ENCODE measurements at regions of chr3 and their contacts with region 1.

Region 1: DNA sequence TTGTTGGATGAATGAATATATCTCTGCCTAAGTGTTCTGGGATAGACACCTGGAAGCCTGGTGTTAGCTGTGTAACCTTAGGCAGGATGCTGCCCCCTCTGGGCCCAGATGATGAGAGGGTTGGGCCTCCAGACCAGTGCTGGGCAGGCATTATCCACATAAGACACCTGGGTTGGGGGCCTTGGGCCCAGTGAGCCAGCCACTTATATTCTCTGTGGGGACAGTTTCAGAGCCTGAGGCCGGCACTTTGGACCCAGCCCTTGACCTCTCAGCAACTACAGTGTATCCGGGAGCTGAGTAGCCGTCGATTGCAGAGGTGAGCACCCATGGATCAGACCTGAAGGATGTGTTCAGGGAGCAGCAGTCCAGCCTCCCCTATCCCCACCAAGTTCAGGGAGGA is 2.2 kb downstream of the HEMK1 start:
- DNase-seq: no peak
- H3K4me3 ChIP-seq: no peak overlapping the region
- CTCF ChIP-seq: no peak
- POLR2A ChIP-seq: no peak

Region 2: DNA sequence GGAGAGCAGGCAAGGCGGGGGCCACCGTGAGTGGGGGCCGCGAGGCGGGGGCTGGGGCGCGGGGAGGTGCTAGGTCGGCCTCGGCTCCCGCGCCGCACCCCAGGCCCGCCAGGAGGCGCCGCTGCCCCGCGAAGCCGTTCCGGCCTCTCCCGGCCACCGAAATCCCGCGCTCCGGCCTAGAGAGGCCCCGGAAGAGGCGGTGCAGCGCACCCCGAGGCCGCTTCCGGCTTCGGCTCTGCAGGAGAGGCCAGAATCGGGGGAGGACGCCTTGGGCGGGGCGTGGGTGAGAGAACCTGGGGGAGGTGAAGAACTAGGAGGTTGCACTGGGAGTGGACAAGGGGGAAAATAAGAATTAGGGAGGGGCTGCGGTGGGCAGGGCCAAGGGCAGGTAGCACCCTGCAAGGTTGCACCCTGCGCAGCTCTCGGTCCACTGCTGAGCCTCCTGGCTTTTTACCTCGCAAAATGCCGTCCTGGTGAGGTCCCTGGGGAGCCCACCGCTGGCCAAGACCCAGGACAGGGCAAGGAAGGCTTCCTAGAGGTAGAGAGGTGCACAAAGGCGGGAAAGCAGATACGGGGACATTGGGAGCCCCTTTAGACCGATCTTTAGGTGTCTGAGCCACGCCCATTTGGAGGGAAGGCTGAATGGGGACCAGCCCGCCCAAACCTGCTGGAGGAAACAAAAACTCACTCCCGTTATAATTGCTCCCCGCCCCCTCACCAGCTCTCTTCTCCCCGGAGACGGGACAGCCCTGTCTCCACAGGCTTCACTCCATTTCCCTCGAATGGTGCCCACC is 343.9 kb before region 1 on chr3:
- intact Hi-C with region 1: no loop called
- DNase-seq: peak; percentile 90 to 97
- H3K4me3 ChIP-seq: peak overlapping the region; percentile 56
- CTCF ChIP-seq: peak in 2 of 3 donors; percentile 10 to 42
- POLR2A ChIP-seq: no peak

Region 3: DNA sequence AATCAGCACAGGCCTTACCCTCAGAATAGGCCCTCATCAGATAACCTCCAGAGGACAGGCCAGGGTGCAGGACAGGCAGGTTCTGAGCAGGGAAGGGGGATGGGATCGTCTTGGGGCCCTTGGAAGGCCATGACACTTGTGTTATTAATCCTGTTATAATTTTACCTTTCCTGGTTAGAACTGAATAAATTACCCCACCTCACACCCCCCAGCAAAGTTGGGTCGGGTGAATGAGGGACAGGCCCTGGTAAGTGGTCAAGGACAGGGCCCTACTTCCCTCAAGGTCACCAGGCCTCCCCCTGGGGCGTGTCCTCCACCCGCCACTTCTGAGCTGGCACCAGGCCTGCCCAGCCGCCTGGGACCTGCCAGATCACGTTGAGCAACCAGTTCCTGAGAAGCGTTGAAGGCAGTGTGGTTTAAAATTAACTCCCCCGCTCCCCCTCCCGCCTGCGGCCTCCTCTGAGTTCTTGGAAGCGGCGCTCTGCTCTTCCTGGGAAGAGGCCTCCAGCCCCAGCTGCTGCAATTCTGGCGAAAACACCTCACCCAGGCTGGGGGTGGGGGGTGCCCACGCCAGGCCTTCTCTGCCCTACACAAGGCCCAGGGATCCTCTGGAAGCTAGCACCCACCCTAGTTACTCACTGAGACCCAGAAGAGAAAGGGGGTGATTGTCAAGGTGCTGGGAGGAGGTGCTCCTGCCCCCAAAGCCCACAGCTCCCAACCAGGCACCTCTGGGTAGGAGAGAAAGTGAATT is 29.5 kb after region 1 on chr3:
- intact Hi-C with region 1: no loop called
- DNase-seq: peak; percentile 96 to 99
- H3K4me3 ChIP-seq: no peak overlapping the region
- CTCF ChIP-seq: no peak
- POLR2A ChIP-seq: no peak

Region 4: DNA sequence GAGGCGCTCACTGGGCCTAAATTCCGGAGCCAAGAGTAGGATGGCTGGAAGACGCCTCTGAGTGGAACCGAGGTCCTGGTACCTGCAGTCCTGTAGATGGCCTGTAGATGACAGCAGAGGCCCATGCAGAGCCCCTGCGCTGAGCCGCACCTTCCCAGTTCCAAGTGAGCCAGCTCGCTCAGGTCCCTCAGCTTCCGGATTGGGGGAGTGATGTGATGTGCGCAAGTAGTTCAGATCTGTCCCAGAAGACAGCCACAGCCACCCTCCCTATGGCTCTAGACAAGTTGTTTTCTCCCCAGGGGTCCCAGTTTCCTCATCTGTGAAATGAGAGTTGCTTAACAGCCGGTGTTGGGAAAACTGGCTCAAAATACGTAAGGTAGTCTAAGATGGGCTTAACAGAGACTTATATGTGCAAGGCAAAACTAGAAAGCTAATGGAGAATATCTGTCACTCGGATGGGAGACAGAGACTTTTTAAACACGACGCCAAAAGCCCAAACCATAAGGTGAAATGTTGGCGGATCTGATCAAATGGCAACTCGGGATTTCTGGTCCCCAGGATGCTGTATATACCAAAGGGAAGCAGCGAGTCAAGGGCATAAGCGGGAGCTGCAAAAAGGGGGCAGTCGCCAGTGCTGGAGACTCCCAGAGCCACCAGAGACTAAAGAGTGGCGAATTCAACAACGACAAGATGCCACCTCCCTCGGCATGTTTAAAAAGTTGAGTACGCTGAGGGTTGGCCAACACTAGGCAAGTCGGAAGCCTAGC is 44.7 kb after region 1 on chr3:
- intact Hi-C with region 1: loop called (anchors 2 kb)
- DNase-seq: peak; percentile 82 to 97
- H3K4me3 ChIP-seq: peak overlapping the region; percentile 23
- CTCF ChIP-seq: peak in 1 of 3 donors; percentile 99
- POLR2A ChIP-seq: no peak